Esophagus muscularis mucosa (tissue), 4 donors: ENCODE measurements at regions of chr17 and their contacts with region 1.

Region 1: GRCh38 chr17:63406689-63407330 is 39.3 kb downstream of the CYB561 start:
- DNase-seq: no peak
- H3K4me3 ChIP-seq: no peak overlapping the region
- H3K27ac ChIP-seq: peak overlapping the region in 1 of 4 donors; percentile 13
- H3K4me1 ChIP-seq: peaks cover 0 to 19% (median 12%) of the 10 kb centered on the region in 4 donors
- H3K27me3 ChIP-seq: no peaks in the 10 kb centered on the region
- CTCF ChIP-seq: peak; percentile 80 to 87 (median 82)
- EP300 ChIP-seq: no peak
- POLR2A ChIP-seq: no peak

Region 2: GRCh38 chr17:62703775-62704378 is 702.9 kb before region 1 on chr17:
- intact Hi-C with region 1: loop called (anchors 1 kb)
- DNase-seq: no peak
- H3K4me3 ChIP-seq: peak overlapping the region; percentile 65 to 90 (median 72)
- H3K27ac ChIP-seq: peak overlapping the region; percentile 61 to 82 (median 74)
- H3K4me1 ChIP-seq: peaks cover 20 to 29% (median 26%) of the 10 kb centered on the region in 4 donors
- H3K27me3 ChIP-seq: peaks cover 0 to 5% (median 0%) of the 10 kb centered on the region in 4 donors
- CTCF ChIP-seq: peak; percentile 85 to 94 (median 86)
- EP300 ChIP-seq: no peak
- POLR2A ChIP-seq: no peak

Region 3: GRCh38 chr17:62968445-62968923 is 438.3 kb before region 1 on chr17:
- intact Hi-C with region 1: loop called (anchors 10 kb)
- DNase-seq: no peak
- H3K4me3 ChIP-seq: no peak overlapping the region
- H3K27ac ChIP-seq: no peak overlapping the region
- H3K4me1 ChIP-seq: peaks cover 14 to 30% (median 29%) of the 10 kb centered on the region in 4 donors
- H3K27me3 ChIP-seq: no peaks in the 10 kb centered on the region
- CTCF ChIP-seq: peak; percentile 71 to 88 (median 73)
- EP300 ChIP-seq: no peak
- POLR2A ChIP-seq: no peak

Region 4: GRCh38 chr17:63082273-63082993 is 324.4 kb before region 1 on chr17:
- intact Hi-C with region 1: loop called (anchors 1 kb)
- DNase-seq: no peak
- H3K4me3 ChIP-seq: no peak overlapping the region
- H3K27ac ChIP-seq: no peak overlapping the region
- H3K4me1 ChIP-seq: no peaks in the 10 kb centered on the region
- H3K27me3 ChIP-seq: no peaks in the 10 kb centered on the region
- CTCF ChIP-seq: peak; percentile 46 to 53 (median 51)
- EP300 ChIP-seq: no peak
- POLR2A ChIP-seq: no peak

Region 5: DNA sequence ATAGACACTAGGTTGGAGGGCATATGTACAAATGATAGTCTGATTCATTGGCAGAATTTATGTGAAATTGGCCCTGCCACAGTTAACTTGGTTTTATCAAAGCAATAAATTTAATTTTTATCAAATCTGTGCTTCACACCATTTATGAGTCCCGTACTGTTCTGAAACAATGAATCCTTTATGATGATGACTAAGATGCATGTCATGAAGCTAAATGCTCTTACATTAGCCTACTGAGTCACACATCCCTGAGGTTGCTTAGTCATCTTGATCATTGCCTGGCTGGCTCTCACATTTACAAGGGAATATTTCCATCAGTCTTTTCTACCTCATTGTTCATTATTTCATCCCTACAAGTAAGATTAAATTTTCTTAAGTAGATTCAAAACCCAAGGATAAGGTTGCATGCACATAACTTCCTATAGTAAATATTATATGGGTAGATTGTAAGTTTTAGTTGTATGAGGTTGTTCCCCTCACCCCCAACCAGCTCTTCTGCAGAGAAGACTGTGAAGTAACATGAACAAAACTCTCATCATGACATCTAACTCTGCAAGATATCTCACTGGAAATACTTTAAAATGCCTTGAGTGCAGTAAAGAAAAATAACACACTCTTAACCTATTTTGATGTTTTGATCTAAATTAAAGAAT is 131.4 kb before region 1 on chr17:
- intact Hi-C with region 1: loop called (anchors 10 kb)
- DNase-seq: no peak
- H3K4me3 ChIP-seq: no peak overlapping the region
- H3K27ac ChIP-seq: no peak overlapping the region
- H3K4me1 ChIP-seq: peaks cover 8 to 65% (median 52%) of the 10 kb centered on the region in 4 donors
- H3K27me3 ChIP-seq: no peaks in the 10 kb centered on the region
- CTCF ChIP-seq: no peak
- EP300 ChIP-seq: no peak
- POLR2A ChIP-seq: no peak

Region 6: GRCh38 chr17:63381101-63381729 is 25.6 kb before region 1 on chr17:
- intact Hi-C with region 1: no loop called
- DNase-seq: no peak
- H3K4me3 ChIP-seq: no peak overlapping the region
- H3K27ac ChIP-seq: no peak overlapping the region
- H3K4me1 ChIP-seq: peaks cover 0 to 6% (median 0%) of the 10 kb centered on the region in 4 donors
- H3K27me3 ChIP-seq: no peaks in the 10 kb centered on the region
- CTCF ChIP-seq: no peak
- EP300 ChIP-seq: no peak
- POLR2A ChIP-seq: no peak